ENCODE measurements at regions of chr7 and their contacts with region 1.

Region 1: GRCh38 chr7:90262438-90262837 is 17.5 kb downstream of the CFAP69 start:
- H3K4me3 Mint-ChIP-seq: no peak overlapping the region
- H3K27ac Mint-ChIP-seq: no peak overlapping the region
- H3K4me1 Mint-ChIP-seq: no peaks in the 10 kb centered on the region
- H3K27me3 Mint-ChIP-seq: no peaks in the 10 kb centered on the region

Region 2: DNA sequence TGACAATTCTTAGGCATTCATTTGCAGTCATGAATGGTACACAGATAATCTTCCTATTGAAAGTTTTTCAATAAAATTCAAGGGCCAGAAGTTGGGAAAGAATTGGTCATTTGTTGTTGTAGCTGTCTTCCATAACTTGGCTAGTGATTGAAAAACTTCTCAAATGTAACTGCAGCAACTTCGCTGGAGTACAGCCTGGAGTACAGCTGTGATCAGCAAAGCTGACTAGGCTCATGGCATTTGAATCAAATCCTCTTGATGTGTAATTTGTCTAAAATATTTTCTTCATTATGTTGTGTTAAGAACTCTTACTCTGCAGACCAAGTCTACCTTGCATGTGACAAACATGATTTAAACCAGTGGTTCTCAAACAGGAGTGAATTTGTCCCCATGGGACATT is 334.7 kb before region 1 on chr7:
- intact Hi-C with region 1: no loop called
- H3K4me3 Mint-ChIP-seq: no peak overlapping the region
- H3K27ac Mint-ChIP-seq: no peak overlapping the region
- H3K4me1 Mint-ChIP-seq: no peaks in the 10 kb centered on the region
- H3K27me3 Mint-ChIP-seq: no peaks in the 10 kb centered on the region

Region 3: GRCh38 chr7:90155206-90155605 is 107.2 kb before region 1 on chr7:
- intact Hi-C with region 1: loop called (anchors 1 kb)
- H3K4me3 Mint-ChIP-seq: no peak overlapping the region
- H3K27ac Mint-ChIP-seq: no peak overlapping the region
- H3K4me1 Mint-ChIP-seq: peaks cover 10% of the 10 kb centered on the region
- H3K27me3 Mint-ChIP-seq: peaks cover 36% of the 10 kb centered on the region

Region 4: DNA sequence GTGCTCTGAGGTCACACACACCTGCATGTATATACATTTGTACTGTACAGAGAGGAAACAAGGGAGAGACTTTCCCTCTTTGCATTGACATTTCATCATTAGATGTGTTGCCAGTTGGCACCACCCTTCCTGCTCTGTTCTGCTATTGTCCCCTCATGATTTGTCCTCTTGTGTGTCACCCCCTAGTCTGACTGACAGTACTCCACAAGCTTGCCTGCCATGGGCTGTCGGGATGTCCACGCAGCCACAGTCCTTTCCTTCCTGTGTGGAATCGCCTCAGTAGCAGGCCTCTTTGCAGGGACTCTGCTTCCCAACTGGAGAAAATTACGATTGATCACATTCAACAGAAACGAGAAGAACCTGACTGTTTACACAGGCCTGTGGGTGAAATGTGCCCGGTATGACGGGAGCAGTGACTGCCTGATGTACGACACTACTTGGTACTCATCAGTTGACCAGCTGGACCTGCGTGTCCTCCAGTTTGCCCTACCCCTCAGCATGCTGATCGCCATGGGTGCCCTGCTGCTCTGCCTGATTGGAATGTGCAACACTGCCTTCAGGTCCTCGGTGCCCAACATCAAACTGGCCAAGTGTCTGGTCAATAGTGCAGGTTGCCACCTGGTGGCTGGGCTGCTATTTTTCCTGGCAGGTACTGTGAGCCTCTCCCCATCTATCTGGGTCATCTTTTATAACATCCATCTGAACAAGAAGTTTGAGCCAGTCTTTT is 150.2 kb after region 1 on chr7:
- intact Hi-C with region 1: loop called (anchors 10 kb)
- H3K4me3 Mint-ChIP-seq: no peak overlapping the region
- H3K27ac Mint-ChIP-seq: no peak overlapping the region
- H3K4me1 Mint-ChIP-seq: no peaks in the 10 kb centered on the region
- H3K27me3 Mint-ChIP-seq: no peaks in the 10 kb centered on the region

Region 5: GRCh38 chr7:90445633-90446032 is 183.2 kb after region 1 on chr7:
- intact Hi-C with region 1: no loop called
- H3K4me3 Mint-ChIP-seq: no peak overlapping the region
- H3K27ac Mint-ChIP-seq: no peak overlapping the region
- H3K4me1 Mint-ChIP-seq: no peaks in the 10 kb centered on the region
- H3K27me3 Mint-ChIP-seq: peaks cover 1% of the 10 kb centered on the region